Dorsolateral prefrontal cortex (tissue), 120 donors: ENCODE measurements at regions of chr7 and their contacts with region 1.

Region 1: GRCh38 chr7:128904381-128905197 is 5.9 kb downstream of the KCP start:
- DNase-seq: no peak
- H3K4me3 ChIP-seq: no peak overlapping the region
- H3K27ac ChIP-seq: no peak overlapping the region
- H3K27me3 ChIP-seq: peaks cover 0 to 40% (median 9%) of the 10 kb centered on the region in 45 donors
- CTCF ChIP-seq: peak in 55 of 56 donors; percentile 22 to 76 (median 54)

Region 2: DNA sequence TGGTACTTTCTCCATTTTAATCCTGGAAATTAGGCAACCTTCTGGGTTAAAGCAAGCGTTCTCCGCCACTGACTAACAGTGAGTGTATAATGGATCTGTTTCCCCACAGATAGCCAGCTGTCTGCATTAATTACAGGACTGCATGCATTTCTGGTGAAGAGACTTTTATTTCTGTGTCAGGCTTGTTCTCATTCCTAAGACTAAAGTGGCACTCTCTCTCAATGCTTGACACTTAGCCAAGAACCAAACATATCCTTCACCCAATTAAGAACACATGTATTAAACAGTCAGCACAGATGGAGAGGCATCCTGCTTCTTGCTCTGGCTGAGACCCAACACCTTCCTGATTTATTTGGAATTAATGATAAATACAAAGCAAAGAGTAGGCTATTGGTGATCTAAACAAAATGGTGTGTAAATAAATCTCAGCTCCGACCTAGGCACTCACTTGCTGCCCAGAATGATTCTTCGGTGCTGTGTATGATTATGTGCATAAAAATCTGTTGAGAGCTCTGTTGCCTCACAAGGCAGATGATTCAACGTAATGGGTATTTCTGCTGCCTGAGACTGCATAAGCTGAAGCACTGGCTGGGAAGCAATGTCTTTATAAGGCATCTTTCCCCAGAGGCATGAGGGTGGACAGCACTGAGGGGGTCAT is 148.6 kb before region 1 on chr7:
- intact Hi-C with region 1: no loop called
- DNase-seq: peak in 1 of 10 donors; percentile 7
- H3K4me3 ChIP-seq: no peak overlapping the region
- H3K27ac ChIP-seq: peak overlapping the region in 30 of 59 donors; percentile 1 to 59 (median 30)
- H3K27me3 ChIP-seq: no peaks in the 10 kb centered on the region
- CTCF ChIP-seq: no peak

Region 3: DNA sequence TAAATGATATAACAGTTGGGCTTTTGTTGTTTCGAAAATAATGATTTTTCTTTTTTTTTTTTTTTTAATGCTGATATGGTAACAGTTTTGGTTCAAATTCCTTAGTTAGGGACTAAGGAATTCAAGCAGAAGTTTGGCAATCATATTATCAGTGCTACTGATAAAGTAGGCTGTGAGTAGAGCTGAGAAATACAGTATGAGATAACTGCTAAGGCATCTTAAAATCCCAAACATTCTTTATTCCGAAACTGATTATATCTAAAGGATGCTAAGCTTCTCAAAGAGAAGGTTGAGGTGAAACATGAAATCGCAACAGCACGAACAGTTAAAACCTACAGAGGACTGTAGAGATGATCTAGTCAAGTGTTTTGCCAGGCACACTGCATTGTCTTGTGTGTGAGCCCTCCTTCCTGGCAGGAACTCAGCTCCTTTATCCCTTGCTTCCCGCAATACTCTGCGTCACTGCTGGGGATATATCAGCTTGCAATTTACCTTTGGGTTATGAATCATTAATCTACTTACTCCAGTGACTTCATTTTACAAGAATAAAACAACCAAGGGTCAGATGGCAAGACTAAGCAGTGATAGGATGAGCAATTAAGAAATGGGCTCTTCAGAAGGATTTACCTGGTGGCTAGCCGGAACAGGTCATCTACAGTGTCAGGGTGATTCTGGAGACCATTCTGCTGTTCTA is 69.8 kb after region 1 on chr7:
- intact Hi-C with region 1: no loop called
- DNase-seq: no peak
- H3K4me3 ChIP-seq: no peak overlapping the region
- H3K27ac ChIP-seq: no peak overlapping the region
- H3K27me3 ChIP-seq: no peaks in the 10 kb centered on the region
- CTCF ChIP-seq: no peak

Region 4: DNA sequence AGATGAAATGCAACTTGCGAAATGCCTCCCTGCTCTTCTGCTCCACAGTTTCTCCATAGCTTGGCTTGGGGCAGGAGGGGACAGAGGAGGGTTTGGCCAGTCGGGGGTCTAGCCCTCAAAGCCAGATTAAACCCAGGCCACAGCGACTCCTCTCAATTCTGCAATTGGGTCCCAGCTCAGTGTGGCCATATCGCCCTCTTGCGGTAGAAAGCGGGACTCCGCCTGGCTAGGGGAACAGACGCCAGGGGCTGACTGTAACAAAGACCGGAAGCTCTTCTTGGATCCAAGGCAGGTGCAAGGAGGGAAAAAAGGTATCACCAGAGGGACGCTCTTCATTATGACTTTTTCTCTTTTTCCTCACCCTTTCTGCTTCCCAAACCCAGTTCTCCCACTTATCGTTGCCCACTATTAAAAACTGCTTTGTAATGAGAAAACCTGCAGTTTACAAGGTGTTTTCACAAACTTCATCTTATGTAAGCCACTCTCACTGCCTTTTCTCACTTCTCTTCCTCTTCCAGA is 187.0 kb after region 1 on chr7:
- intact Hi-C with region 1: loop called (anchors 2 to 5 kb)
- DNase-seq: peak; percentile 54 to 84 (median 73)
- H3K4me3 ChIP-seq: no peak overlapping the region
- H3K27ac ChIP-seq: no peak overlapping the region
- H3K27me3 ChIP-seq: no peaks in the 10 kb centered on the region
- CTCF ChIP-seq: peak; percentile 53 to 98 (median 94)